ENCODE measurements at regions of chr11 and their contacts with region 1.

Region 1: GRCh38 chr11:92329646-92330045 is 105.0 kb downstream of the FAT3 start:
- DNase-seq: no peak

Region 2: GRCh38 chr11:92224407-92225124 is 105.1 kb before region 1 on chr11 and contains the start of gene FAT3:
- intact Hi-C with region 1: loop called in 1 of 2 experiments (anchors 10 kb)
- DNase-seq: peak; percentile 85
- total RNA-seq, gene FAT3: 38.6 to 40.5 TPM

Region 3: DNA sequence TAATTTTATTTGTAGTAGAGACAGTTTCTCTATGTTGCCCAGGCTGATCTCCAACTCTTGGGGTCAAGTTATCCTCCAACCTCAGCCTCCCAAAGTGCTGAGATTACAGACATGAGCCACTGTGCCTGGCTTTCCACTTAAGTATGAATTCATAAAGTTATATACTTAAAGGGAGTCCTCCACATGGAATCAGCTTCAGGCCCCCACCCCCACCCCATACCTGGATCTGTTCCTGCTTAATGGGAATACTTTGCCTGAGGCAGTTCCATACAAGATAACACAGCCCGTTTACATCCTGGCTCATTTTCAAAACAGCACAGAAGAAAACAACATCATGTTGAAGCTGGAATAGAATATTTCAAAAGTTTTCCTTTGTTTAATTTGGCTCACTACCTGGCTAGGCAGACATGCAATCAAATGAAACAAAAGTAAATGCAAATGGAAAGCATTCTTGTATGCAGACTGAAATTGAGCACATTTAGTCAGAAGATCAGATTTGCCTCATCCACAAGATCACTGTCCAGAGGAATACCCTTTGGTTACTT is 22.6 kb before region 1 on chr11:
- intact Hi-C with region 1: loop called in 1 of 2 experiments (anchors 2 kb)
- DNase-seq: no peak